ENCODE measurements at regions of chr7 and their contacts with region 1.

Region 1: DNA sequence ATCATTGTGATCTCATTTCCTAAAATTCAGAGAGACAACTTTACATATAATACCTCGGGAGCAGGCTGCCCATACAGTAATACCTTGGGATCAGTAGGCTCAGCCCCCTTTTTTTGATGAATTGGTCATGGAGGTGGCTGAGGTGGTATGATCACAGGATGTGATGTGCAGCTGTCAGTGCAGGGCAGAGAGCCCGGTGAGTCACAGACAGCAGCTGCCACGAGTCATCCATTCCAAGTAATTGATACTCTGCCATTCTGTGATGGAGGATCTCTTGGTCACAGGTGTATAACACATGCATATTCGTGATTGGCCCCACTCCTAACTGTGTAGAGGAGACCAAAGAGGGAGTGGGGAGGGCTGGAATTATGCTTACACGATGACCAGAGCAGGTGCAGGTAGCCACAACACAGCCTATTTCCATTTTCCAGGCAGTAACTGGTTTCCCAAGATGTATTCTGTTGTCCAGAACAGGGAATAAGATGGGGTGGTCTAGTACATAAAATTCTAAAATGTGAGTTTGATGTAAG is 14.1 kb downstream of the NRCAM start:
- DNase-seq: no peak
- CTCF ChIP-seq: no peak

Region 2: GRCh38 chr7:108419961-108420908 is 21.9 kb before region 1 on chr7:
- CTCF ChIA-PET with region 1: interaction called, 24 read pairs
- POLR2A ChIA-PET with region 1: interaction called, 6 read pairs
- DNase-seq: no peak
- CTCF ChIP-seq: no peak